Activated CD4-positive, alpha-beta memory T cell treated with anti-CD3 and anti-CD28 coated beads, Interleukin-2, amount 10 ng/mL, durations not matched to agents 7 days and 5 days (primary cell): ENCODE measurements at regions of chr1 and their contacts with region 1.

Region 1: GRCh38 chr1:172699111-172699510 is 40.2 kb downstream of the FASLG start:
- DNase-seq: peak; percentile 82
- H3K4me3 Mint-ChIP-seq: peak overlapping the region; percentile 18
- H3K27ac Mint-ChIP-seq: peak overlapping the region; percentile 94
- H3K4me1 Mint-ChIP-seq: peaks cover 47% of the 10 kb centered on the region
- H3K27me3 Mint-ChIP-seq: peaks cover 2% of the 10 kb centered on the region

Region 2: DNA sequence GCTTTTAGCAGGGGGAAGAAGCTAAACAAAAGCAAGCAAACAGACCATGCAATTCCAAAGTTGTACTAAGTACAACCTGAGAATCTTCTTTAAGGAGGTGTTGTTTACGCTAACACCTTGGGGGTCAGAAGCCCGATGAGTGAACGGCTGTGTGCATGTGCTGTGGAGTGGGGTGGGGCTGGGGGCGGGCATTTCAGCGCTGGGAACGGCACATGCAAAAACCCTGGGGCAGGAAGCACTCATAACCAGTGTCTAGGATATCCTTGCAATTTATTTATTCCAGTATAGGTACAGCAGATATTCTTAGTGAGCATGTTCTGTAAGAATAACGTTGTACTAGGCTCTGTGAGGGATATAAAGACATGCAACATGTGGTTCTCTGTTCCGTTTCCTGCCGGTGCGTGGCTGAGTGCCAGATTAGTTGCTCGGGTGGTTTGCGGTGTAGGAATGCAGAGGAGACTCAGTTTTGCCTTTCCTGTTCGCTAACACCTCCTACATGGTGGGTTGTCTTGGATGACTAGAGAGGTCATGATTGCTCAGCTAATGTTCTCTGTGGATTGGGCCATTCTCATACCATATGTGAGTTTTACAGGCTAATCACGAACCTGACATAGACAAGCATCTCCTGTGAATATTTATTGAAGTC is 36.5 kb before region 1 on chr1:
- CTCF ChIA-PET with region 1: interaction called, 5 read pairs
- POLR2A ChIA-PET with region 1: interaction called, 21 read pairs
- DNase-seq: peak; percentile 91
- H3K4me3 Mint-ChIP-seq: peak overlapping the region; percentile 41
- H3K27ac Mint-ChIP-seq: peak overlapping the region; percentile 72
- H3K4me1 Mint-ChIP-seq: peaks cover 53% of the 10 kb centered on the region
- H3K27me3 Mint-ChIP-seq: peaks cover 5% of the 10 kb centered on the region

Region 3: GRCh38 chr1:172671591-172671990 is 27.5 kb before region 1 on chr1:
- CTCF ChIA-PET with region 1: interaction called, 5 read pairs
- POLR2A ChIA-PET with region 1: interaction called, 21 read pairs
- DNase-seq: no peak
- H3K4me3 Mint-ChIP-seq: no peak overlapping the region
- H3K27ac Mint-ChIP-seq: no peak overlapping the region
- H3K4me1 Mint-ChIP-seq: peaks cover 60% of the 10 kb centered on the region
- H3K27me3 Mint-ChIP-seq: no peaks in the 10 kb centered on the region

Region 4: DNA sequence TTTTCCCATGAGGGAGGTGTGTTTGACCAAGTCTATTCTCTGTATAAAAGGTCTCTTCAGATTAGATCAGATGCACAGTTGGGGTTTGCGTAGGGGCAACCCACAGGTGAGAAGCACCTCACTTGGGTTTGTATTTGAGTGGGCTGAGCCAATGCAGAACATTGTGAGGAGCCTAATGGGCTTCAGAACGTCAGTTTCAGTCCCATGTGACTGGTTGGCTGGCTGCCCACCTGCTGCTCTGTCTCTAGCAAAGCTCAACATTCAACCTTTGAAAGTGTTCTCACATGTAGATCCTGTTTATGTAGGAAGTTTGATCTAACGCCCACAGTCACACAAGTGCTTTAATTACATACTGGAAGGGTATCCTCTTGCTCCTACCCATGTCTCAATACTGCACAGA is 65.3 kb after region 1 on chr1:
- CTCF ChIA-PET with region 1: no interaction called
- POLR2A ChIA-PET with region 1: no interaction called
- DNase-seq: no peak
- H3K4me3 Mint-ChIP-seq: no peak overlapping the region
- H3K27ac Mint-ChIP-seq: no peak overlapping the region
- H3K4me1 Mint-ChIP-seq: no peaks in the 10 kb centered on the region
- H3K27me3 Mint-ChIP-seq: peaks cover 26% of the 10 kb centered on the region